Dorsolateral prefrontal cortex (tissue), 120 donors: ENCODE measurements at regions of chr17 and their contacts with region 1.

Region 1: GRCh38 chr17:45385331-45385997 is 47.2 kb downstream of the ARHGAP27 start:
- DNase-seq: peak; percentile 74 to 91 (median 81)
- H3K4me3 ChIP-seq: no peak overlapping the region
- H3K27ac ChIP-seq: peak overlapping the region in 29 of 59 donors; percentile 1 to 73 (median 44)
- H3K27me3 ChIP-seq: peaks cover 0 to 16% (median 0%) of the 10 kb centered on the region in 45 donors
- CTCF ChIP-seq: peak; percentile 92 to 100 (median 98)

Region 2: DNA sequence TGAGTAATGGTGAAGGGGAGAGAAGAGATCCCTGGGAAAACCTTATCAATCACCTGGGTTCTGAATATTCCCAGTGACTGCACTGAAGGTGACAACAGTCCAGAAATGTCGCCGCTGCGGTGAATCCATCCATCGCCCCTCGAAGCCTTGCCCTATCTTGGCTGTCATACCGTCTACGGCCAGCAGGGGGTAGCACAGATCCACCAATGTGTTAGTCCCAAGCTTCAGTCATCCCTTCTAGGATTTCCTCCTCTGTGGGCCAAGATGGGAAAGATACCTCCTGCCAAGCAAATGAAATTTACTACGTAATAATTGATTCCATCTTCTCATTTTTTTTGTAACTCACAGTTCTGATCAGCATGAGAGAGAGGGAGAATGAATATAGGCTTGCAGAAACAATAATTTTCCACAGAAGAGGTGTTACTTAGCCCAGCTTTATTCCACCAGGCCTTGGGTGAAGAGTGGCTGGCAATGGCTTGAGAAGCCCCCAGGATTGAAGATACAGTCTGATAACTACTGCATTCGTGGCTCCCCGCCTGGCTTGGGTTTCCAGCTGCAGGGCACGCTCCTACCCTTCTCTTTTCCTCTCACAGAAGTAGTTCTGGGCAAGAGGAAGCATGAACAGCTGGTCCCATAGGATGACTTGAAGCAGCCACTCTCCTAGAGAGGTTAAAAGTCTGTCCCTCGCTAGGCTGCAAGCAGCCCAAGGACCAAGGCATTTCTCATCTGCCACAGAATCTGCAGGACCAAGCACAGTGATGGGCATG is 166.4 kb before region 1 on chr17:
- intact Hi-C with region 1: loop called (anchors 2 kb)
- DNase-seq: peak; percentile 81 to 95 (median 92)
- H3K4me3 ChIP-seq: peak overlapping the region in 21 of 59 donors; percentile 10 to 38 (median 33)
- H3K27ac ChIP-seq: peak overlapping the region in 1 of 59 donors; percentile 9
- H3K27me3 ChIP-seq: peaks cover 0 to 25% (median 0%) of the 10 kb centered on the region in 45 donors
- CTCF ChIP-seq: peak; percentile 92 to 99 (median 98)

Region 3: GRCh38 chr17:45277216-45277849 is 108.1 kb before region 1 on chr17:
- intact Hi-C with region 1: loop called (anchors 1 to 2 kb)
- DNase-seq: peak; percentile 83 to 98 (median 92)
- H3K4me3 ChIP-seq: peak overlapping the region in 9 of 59 donors; percentile 0 to 36 (median 15)
- H3K27ac ChIP-seq: peak overlapping the region in 6 of 59 donors; percentile 2 to 47 (median 35)
- H3K27me3 ChIP-seq: no peaks in the 10 kb centered on the region
- CTCF ChIP-seq: peak; percentile 25 to 90 (median 82)